Right ventricle myocardium superior (tissue), 1 donor: ENCODE measurements at regions of chr4 and their contacts with region 1.

Region 1: DNA sequence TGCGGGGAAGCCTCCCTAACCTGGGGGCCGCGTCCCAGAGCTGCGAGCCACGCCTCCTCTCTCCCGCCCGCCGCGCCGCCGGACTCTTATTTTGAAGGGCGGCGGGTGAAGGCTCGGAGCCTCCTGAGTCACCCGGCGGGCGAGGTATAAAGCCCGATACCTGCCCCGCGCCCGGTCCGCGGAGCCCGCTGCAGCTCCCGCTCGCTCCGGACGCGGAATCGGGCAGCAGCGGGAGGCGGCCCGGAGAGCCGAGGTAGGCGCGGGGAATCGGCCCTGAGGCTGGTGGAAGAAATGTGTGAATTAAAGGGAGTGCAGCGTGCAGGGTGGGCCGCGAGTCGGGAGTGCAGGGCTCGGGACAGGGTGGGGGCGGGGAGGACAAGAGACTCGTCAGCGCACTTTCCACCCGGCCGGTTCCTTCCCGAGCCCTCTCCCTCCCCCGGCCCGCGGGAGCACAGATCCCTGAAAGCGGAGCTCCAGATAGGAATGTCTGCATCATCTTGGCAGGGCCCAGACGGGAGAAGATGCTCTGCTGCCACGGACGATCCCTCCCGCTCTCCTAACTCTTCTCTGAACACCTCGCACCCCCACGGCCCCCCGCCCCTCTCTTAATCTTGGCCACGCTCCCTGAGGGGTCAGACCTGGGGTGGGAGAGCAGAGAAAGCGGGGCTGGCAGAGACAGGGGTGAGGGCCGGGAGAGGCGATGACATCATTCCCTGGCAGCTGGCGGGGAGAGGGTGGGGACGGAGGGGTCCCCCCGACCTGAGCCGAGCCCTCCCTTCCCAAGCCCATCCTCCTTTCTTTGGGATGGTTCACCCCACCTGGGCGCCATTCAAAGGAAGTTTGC is 177.9 kb downstream of the CBR4 start:
- DNase-seq: peak; percentile 88
- ATAC-seq: peak; percentile 89

Region 2: DNA sequence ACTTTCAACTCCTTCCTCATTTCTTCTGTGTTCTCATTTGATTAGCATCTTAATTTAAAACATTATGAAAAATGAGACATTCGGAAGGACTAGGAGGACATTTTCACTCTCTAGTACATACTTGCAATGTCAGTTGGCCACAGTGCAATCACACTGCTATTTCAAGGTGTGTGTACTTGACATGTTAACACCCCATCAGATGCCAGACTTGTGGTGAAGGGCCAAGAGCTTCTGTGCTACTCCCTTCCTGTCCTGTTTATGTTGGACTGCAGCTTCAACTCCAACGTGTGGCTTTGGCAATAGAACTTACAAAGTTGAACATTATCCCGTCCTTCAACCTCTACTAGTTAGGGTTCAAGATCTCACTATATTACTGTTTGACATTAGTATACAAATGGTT is 114.3 kb before region 1 on chr4:
- intact Hi-C with region 1: loop called (anchors 5 kb)
- DNase-seq: peak; percentile 42
- ATAC-seq: peak; percentile 95

Region 3: DNA sequence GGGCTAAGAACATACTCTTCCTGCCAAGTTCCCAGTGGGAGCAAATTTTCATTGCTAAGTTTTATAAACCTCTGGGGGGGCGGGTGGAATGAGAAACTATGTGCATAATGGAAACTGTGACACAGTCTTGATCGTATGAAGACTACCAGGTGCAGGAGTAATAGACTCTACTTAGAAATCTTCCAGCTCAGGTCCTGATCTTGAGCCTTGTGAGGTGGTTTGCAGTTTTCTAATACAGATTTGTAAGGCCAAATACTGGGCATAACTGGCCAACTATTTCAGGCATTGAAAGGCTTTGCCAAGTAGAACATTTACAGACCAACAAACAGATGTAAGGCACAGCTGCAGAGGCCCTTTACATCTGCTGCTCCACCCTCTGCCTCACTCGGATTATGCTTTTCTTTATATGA is 267.6 kb after region 1 on chr4:
- intact Hi-C with region 1: no loop called
- DNase-seq: no peak
- ATAC-seq: peak; percentile 68